GM10248 (cell line): ENCODE measurements at regions of chr5 and their contacts with region 1.

Region 1: DNA sequence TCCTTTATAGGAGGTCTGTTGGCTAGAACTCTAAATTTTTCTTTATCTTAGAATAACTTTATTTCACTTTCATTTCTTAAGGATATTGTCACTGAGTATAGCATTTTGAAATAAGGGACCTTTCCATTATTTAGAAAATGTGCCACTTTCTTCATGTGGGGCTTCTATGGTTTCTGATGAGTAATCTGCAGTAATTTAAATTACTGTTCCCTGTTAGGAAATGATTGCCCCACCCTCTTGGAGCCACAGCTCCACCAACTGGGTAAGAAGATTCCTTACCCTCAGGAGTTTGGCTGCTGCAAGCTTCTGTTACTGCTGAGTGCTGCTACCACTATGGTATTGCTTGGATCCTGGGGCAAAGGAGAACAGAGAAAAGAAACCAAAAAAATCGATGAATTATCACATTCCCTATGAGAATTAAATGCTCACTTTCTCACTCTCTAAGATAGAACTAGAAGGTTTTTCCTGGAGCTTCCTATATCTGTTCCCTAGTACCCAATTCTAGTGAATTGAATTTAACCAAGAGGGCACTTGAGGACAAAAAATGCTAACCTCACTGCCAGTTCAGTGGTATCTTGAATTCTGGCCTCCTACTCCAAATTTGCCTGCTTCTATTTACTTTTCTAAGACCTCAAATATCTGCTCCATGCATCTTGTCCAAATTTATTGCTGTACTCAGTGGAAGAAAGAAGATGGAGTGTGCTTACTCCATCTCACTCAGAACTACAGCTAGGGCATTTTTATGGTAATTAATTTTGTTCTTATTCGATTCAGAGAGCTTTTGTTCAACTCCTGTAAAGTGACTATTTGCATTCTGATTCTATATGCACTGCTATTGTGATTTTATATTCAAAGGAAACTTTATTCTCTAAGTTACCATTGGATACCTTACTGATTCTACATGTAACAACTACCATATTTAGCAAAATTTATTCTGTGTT is 2111.3 kb downstream of the MAT2B start:
- DNase-seq: no peak
- CTCF ChIP-seq: no peak

Region 2: GRCh38 chr5:165630261-165630778 is 13.6 kb after region 1 on chr5:
- CTCF ChIA-PET with region 1: interaction called, 38 read pairs
- POLR2A ChIA-PET with region 1: no interaction called
- DNase-seq: peak; percentile 32
- CTCF ChIP-seq: peak; percentile 78